Activated B cell treated with CpG ODN at 0.5 μM for 24 hours (primary cell): ENCODE measurements at regions of chr2 and their contacts with region 1.

Region 1: DNA sequence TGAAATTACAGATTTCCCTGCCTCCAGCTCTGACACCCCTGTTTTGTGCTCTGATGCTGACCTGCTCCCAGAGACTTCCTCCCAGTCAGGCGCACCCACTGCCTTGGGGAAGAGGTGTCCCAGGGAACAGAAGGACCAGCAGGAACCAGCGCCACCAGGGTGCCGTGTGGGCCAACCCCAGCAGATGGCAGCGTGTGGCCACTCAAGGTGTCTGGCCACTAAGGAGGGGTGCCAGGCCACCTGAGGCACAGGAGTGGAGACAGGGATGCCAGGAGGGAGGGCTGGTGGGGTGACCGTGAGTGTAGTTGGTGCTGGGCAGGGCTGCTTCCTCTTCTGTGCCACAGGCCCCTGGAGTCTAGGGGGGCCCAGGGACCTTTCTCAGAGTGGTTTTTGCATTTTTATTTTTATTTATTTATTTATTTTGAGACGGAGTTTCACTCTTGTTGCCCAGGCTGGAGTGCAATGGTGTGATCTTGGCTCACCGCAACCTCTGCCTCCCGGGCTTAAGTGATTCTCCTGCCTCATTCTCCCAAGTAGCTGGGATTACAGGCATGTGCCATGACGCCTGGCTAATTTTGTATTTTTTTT is 56.0 kb downstream of the TEX44 start:
- DNase-seq: peak; percentile 71
- ATAC-seq: peak; percentile 98
- H3K4me3 Mint-ChIP-seq: no peak overlapping the region
- H3K27ac Mint-ChIP-seq: peak overlapping the region; percentile 63
- H3K4me1 Mint-ChIP-seq: peaks cover 8% of the 10 kb centered on the region
- H3K27me3 Mint-ChIP-seq: no peaks in the 10 kb centered on the region
- CTCF ChIP-seq: no peak

Region 2: DNA sequence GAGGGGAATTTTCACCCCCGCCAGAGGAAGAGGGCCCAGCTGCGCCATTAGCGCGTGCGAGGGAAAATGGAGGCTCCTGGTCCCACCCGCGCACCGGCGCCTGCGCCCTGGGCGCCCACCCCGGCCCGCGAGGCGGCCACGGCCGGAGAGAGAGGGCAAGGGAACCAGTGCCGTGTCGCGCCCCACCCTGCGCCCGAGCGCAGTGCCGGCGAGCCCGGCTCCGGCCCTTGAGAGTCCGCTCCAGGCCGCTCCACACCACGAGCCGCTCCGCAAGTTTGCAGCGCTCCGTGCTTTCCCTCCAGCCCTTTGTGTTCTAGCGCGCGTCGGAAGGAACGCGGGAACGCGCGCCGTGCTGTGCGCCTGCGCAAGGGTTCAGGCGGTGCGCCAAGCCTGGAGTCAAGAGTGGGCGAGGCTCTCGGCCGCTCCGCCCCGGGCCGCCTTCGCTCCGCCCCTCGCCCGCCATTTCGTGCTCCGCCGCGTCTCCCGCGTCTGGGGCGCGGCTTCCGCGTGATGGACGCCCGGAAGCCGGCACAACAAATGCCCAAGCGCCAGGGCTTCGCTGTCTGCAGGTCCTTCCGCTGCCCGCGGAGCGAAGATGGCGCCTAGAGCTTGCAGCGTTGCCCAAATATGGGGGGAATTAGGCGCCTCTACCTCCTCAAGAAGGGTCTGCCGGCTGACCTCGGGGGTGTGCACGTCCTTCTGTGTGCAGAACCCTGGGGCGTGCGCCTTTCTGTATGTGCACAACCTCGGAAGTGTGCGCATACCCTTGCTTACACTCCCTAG is 13.5 kb after region 1 on chr2:
- CTCF ChIA-PET with region 1: no interaction called
- POLR2A ChIA-PET with region 1: interaction called, 6 read pairs
- intact Hi-C with region 1: loop called (anchors 1 kb)
- DNase-seq: peak; percentile 97
- ATAC-seq: peak; percentile 78
- H3K4me3 Mint-ChIP-seq: peak overlapping the region; percentile 74
- H3K27ac Mint-ChIP-seq: peak overlapping the region; percentile 92
- H3K4me1 Mint-ChIP-seq: peaks cover 67% of the 10 kb centered on the region
- H3K27me3 Mint-ChIP-seq: no peaks in the 10 kb centered on the region
- CTCF ChIP-seq: no peak

Region 3: GRCh38 chr2:231687133-231687852 is 38.6 kb after region 1 on chr2:
- CTCF ChIA-PET with region 1: interaction called, 7 read pairs
- POLR2A ChIA-PET with region 1: no interaction called
- intact Hi-C with region 1: loop called (anchors 2 kb)
- DNase-seq: peak; percentile 68
- ATAC-seq: peak; percentile 91
- H3K4me3 Mint-ChIP-seq: no peak overlapping the region
- H3K27ac Mint-ChIP-seq: peak overlapping the region; percentile 32
- H3K4me1 Mint-ChIP-seq: peaks cover 39% of the 10 kb centered on the region
- H3K27me3 Mint-ChIP-seq: no peaks in the 10 kb centered on the region
- CTCF ChIP-seq: peak; percentile 39